MCF 10A (cell line): ENCODE measurements at regions of chr14 and their contacts with region 1.

Region 1: DNA sequence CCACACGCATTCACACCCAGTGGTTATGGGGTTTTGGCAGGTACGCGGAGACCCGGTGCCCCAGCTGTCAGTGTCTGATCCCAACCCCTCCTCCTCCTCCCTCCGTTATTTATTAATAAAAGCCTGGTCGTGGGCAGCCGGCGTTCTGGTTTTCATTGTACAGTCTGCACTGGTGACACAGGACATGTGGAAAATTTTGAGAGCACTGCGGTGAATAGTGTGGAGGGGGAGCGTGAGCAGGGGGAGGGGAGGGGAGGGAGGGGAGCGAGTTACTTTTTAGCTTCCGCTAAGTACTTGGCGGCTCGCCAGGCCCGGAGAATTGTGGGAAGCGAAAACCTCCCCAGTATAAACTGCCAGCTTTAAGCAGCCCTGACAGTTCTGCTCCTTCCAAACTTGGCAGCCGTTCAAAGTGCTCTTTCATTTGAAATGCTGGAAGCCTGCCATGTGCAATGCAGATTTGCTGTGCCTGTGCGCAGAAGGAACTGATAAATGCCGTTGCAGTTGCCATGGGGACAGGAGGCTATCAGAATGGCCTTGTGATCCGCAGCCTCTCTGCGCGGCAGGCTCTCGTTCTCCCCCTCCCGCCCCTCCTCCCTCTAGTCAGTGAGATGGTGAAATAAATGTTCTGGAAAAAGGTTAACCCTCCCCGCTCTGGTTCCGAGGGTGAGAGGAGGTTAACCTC is 11.7 kb upstream of the IRF2BPL start:
- DNase-seq: peak; percentile 99
- H3K4me3 Mint-ChIP-seq: peak overlapping the region; percentile 54
- H3K27ac Mint-ChIP-seq: peak overlapping the region; percentile 82
- H3K4me1 Mint-ChIP-seq: peaks cover 59% of the 10 kb centered on the region
- H3K27me3 Mint-ChIP-seq: no peaks in the 10 kb centered on the region
- CTCF ChIP-seq: no peak

Region 2: GRCh38 chr14:76947078-76947837 is 92.9 kb before region 1 on chr14:
- CTCF ChIA-PET with region 1: interaction called, 6 read pairs
- POLR2A ChIA-PET with region 1: interaction called, 325 read pairs
- intact Hi-C with region 1: no loop called
- DNase-seq: peak; percentile 88
- H3K4me3 Mint-ChIP-seq: peak overlapping the region; percentile 31
- H3K27ac Mint-ChIP-seq: peak overlapping the region; percentile 94
- H3K4me1 Mint-ChIP-seq: peaks cover 28% of the 10 kb centered on the region
- H3K27me3 Mint-ChIP-seq: no peaks in the 10 kb centered on the region
- CTCF ChIP-seq: peak; percentile 31

Region 3: DNA sequence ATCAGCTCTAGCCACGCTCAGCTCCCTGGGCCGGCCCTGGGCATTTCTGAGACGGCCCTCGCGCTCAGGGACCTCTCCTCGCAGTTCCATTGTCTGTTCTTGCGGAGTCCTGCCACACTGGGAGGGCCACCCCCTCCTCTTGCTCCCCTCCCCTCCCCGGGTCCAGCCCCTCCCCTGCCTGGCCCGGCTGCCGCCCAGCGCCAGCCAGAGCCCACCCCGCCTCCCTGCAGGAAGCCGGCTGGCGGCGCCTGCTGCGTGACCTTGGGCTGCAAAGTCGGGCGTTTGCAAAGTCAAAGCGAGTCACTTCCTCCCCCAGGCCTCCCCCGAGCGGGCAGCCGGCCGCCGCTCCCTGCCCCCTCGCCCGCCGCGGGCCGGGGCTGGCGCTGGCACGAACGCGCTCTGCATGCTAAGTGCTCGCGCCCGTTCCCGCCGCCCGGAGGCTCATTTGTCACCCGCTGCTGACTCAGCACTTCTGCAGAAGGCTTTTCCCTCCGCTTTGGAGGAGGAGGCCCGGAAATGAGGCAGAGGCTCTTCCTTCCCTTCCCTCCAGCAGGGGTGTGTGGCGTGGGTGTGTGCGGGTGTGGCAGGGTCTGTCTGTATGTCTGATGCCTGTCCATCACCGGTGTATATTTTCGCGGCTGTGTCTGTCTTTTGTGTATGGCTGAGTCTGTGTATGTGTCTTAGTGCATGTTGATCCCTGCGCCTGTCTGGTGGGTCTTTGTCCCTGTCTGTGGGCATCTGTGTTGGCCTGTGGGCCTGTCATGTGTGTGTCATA is 83.7 kb before region 1 on chr14:
- CTCF ChIA-PET with region 1: interaction called, 40 read pairs
- POLR2A ChIA-PET with region 1: interaction called, 325 read pairs
- intact Hi-C with region 1: no loop called
- DNase-seq: peak; percentile 97
- H3K4me3 Mint-ChIP-seq: peak overlapping the region; percentile 49
- H3K27ac Mint-ChIP-seq: peak overlapping the region; percentile 92
- H3K4me1 Mint-ChIP-seq: peaks cover 55% of the 10 kb centered on the region
- H3K27me3 Mint-ChIP-seq: no peaks in the 10 kb centered on the region
- CTCF ChIP-seq: no peak

Region 4: DNA sequence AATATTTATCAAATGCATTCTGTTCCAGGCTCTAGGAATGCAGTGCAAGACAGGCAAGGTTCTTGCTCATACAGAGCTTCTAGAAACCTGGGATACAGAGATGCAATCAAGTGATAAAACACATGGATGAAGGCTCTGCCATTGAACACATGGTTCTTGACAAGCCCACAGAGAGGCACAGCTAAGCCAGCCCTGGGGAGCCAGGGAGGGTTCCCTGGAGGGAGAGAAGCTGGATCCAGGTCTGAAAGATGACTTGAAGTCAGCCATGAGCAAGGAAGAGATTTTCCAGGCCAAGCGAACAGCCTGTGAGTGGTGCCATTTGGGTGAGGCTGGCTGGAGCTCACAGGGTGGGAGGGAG is 77.9 kb before region 1 on chr14:
- CTCF ChIA-PET with region 1: interaction called, 40 read pairs
- POLR2A ChIA-PET with region 1: interaction called, 325 read pairs
- intact Hi-C with region 1: no loop called
- DNase-seq: no peak
- H3K4me3 Mint-ChIP-seq: peak overlapping the region; percentile 74
- H3K27ac Mint-ChIP-seq: peak overlapping the region; percentile 92
- H3K4me1 Mint-ChIP-seq: peaks cover 37% of the 10 kb centered on the region
- H3K27me3 Mint-ChIP-seq: no peaks in the 10 kb centered on the region
- CTCF ChIP-seq: no peak

Region 5: GRCh38 chr14:77059276-77059915 is 19.2 kb after region 1 on chr14:
- CTCF ChIA-PET with region 1: interaction called, 10 read pairs
- POLR2A ChIA-PET with region 1: interaction called, 35 read pairs
- intact Hi-C with region 1: no loop called
- DNase-seq: peak; percentile 83
- H3K4me3 Mint-ChIP-seq: no peak overlapping the region
- H3K27ac Mint-ChIP-seq: peak overlapping the region; percentile 78
- H3K4me1 Mint-ChIP-seq: peaks cover 12% of the 10 kb centered on the region
- H3K27me3 Mint-ChIP-seq: no peaks in the 10 kb centered on the region
- CTCF ChIP-seq: peak; percentile 15